Activated CD4-positive, alpha-beta T cell treated with anti-CD3 and anti-CD28 coated beads for 36 hours (primary cell): ENCODE measurements at regions of chr7 and their contacts with region 1.

Region 1: DNA sequence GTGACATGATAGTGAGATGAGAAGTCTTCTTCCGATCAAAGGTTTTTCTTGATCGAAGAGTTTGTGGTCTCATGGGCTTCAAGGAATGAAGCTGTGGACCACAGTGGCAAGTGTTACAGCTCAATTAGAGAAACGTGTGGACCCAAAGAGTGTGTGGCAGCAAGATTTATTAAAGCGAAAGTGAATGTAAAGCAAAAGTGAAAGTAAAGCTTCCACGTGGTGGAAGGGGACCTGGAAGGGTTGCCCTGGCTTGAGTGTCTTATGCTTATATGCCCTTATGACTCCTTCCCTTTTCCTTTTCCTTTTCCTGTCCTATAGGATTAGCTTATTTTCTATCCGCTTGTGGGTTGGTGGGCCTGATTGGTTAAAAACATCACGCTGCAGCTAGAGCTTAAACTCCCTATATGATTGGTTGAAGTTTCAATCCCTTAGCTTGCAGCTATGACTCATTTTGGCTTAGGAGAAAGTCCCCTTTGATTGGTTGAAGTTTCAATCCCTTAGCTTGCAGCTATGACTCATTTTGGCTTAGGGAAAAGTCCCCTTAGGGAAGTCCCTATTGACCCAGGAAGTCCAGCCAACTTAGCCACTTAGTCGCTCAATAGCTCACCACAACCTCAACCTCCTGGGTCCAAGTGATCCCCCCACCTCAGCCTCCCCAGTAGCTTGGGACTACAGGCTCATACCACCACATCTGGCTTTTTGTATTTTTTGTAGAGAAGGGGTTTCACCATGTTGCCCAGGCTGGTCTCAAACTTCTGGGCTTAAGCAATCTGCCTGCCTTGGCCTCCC is 34.7 kb downstream of the MRPS24 start:
- DNase-seq: peak; percentile 62
- ATAC-seq: peak; percentile 80
- H3K4me3 Mint-ChIP-seq: peak overlapping the region; percentile 66
- H3K27ac Mint-ChIP-seq: peak overlapping the region; percentile 93
- H3K4me1 Mint-ChIP-seq: peaks cover 30% of the 10 kb centered on the region
- H3K27me3 Mint-ChIP-seq: no peaks in the 10 kb centered on the region

Region 2: DNA sequence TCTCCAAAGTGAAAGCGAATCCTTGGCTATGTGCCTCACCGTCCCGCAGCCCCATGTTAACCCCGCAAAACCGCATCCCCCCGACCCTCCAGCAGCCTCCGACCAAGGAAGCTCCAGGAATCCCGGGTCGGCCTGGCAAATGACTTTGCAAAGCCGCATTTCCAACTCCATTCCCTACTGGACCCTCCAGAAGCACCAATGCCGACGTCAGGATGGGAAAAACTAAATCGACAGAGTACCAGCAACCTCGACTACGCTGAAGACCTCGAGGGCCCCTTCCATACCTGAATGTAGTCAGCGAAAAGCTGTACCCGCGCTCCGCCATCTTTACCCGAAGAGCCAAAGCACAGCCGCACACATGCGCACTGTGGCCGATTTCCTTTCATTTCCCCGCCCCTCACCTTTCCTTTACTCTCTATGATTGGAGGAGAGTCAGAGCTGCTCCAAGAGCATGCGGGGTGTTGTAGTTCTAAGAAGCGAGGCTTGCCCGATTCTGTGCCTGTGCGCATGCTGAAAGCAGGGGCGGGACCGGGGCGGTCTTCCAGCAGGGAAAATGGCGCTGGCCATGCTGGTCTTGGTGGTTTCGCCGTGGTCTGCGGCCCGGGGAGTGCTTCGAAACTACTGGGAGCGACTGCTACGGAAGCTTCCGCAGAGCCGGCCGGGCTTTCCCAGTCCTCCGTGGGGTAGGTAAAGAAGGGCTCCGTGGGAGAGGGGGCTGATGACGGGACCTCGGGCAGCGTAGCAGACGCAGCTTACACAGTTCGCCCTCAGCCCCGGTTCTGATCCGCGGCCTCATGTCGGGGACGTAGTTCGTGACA is 902.6 kb before region 1 on chr7 and contains the starts of genes MRPL32 and PSMA2:
- CTCF ChIA-PET with region 1: interaction called, 3 read pairs
- POLR2A ChIA-PET with region 1: no interaction called
- intact Hi-C with region 1: loop called in 1 of 2 experiments (anchors 10 kb)
- DNase-seq: peak; percentile 95
- ATAC-seq: peak; percentile 100
- H3K4me3 Mint-ChIP-seq: peak within 1 kb of the TSS; percentile 98
- H3K27ac Mint-ChIP-seq: peak within 1 kb of the TSS; percentile 100
- H3K4me1 Mint-ChIP-seq: peaks cover 67% of the 10 kb centered on the region
- H3K27me3 Mint-ChIP-seq: no peaks in the 10 kb centered on the region
- total RNA-seq, gene MRPL32: 74.7 to 75.5 TPM
- total RNA-seq, gene PSMA2: 109 to 217 TPM

Region 3: GRCh38 chr7:43302211-43302711 is 532.4 kb before region 1 on chr7:
- CTCF ChIA-PET with region 1: interaction called, 3 read pairs
- POLR2A ChIA-PET with region 1: no interaction called
- intact Hi-C with region 1: loop called in 1 of 2 experiments (anchors 5 kb)
- DNase-seq: peak; percentile 56
- ATAC-seq: peak; percentile 72
- H3K4me3 Mint-ChIP-seq: no peak overlapping the region
- H3K27ac Mint-ChIP-seq: no peak overlapping the region
- H3K4me1 Mint-ChIP-seq: peaks cover 35% of the 10 kb centered on the region
- H3K27me3 Mint-ChIP-seq: peaks cover 8% of the 10 kb centered on the region

Region 4: DNA sequence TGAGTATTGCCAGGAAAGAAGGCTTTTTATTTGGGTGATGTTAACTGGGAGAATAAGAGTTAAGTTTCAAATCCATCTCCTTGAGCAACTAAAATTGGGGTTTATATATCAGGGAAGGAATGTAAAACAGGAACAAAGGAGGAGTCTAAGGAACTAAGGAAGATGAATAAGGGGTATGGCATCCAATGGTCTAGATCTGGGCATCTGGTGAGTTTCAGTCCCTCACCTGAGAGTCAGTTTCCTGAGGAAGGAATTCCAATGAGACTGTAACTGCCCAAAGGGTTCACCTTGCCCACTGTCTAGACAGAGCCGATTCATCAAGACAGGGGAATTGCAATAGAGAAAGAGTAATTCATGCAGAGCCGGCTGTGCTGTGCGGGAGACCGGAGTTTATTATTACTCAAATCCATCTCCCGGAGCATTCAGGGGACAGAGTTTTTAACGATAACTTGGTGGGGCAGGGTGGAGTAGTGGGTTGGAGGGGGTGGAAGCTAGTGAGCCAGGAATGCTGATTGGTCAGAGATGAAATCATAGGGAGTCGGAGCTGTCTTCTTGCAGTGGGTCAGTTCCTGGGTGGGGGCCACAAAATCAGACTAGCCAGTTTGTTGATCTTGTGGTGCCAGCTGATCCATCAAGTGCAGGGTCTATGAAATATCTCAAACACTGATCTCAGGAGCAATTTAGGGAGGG is 440.1 kb before region 1 on chr7:
- CTCF ChIA-PET with region 1: no interaction called
- POLR2A ChIA-PET with region 1: no interaction called
- intact Hi-C with region 1: no loop called
- DNase-seq: no peak
- ATAC-seq: no peak
- H3K4me3 Mint-ChIP-seq: no peak overlapping the region
- H3K27ac Mint-ChIP-seq: no peak overlapping the region
- H3K4me1 Mint-ChIP-seq: no peaks in the 10 kb centered on the region
- H3K27me3 Mint-ChIP-seq: peaks cover 24% of the 10 kb centered on the region

Region 5: DNA sequence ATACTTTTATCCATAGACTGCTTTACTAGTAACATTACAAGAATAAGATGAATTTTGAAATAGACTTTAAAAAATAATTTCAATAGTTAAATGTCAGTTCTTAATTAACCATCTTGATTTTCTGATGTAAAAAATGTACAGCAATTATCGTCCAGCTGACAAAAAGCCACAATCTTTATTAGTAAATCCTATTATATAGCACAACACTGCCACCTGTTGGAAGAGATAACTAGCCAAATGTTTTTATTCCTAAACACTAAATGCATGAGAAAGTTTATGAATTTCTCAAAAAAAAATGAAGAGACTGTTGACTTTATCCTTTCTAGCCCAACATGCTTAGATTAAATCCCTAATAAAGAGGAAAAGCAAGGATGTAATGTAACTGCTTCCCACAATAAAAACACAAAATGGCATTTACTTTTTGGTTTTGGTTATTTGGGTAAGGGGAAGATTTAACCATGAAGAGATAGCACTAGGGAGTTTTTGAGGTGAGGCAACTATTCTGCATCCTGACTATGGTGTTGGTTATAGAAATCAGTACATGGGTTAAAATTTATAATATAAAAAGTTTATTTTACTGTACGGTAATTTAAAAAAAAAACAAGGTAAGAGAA is 113.4 kb before region 1 on chr7:
- CTCF ChIA-PET with region 1: interaction called, 13 read pairs
- POLR2A ChIA-PET with region 1: no interaction called
- intact Hi-C with region 1: no loop called
- DNase-seq: no peak
- ATAC-seq: no peak
- H3K4me3 Mint-ChIP-seq: no peak overlapping the region
- H3K27ac Mint-ChIP-seq: peak overlapping the region; percentile 52
- H3K4me1 Mint-ChIP-seq: peaks cover 41% of the 10 kb centered on the region
- H3K27me3 Mint-ChIP-seq: no peaks in the 10 kb centered on the region

Region 6: DNA sequence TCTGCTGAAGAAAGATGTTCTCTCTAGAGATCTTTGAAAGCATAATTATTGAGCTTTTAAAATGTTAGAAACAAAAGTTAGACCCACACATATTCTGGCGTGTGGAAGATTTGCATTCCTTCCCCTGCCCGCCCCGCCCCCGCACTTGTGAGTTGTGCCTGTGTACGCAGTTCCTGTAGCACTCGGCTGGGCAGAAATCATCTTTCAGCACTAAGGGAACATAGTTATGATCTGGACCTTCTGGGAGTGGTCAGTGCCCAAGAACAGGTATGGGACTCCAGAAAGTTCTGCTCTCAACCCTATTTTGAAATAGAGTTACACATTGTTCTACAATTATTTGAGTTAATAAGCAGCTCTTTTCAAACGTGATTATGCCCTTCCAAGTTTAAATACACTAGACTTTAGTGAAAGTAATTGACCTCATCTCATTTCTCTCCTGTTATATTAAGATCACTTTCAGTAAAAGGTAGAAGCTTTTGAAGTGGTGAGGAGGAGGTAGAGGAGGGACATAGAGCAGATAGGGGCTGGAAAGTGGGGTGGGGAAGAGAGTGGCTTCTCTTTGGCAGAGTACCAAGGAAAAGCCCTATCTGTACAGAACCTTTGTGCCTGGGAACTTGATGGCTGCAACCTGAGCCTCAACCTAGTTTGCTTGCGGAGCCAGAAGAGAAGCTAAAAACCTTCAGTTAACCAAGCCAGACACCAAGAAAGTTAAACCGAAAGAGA is 70.5 kb before region 1 on chr7:
- CTCF ChIA-PET with region 1: interaction called, 15 read pairs
- POLR2A ChIA-PET with region 1: no interaction called
- intact Hi-C with region 1: loop called in 1 of 2 experiments (anchors 5 kb)
- DNase-seq: peak; percentile 80
- ATAC-seq: peak; percentile 51
- H3K4me3 Mint-ChIP-seq: peak overlapping the region; percentile 30
- H3K27ac Mint-ChIP-seq: peak overlapping the region; percentile 55
- H3K4me1 Mint-ChIP-seq: peaks cover 42% of the 10 kb centered on the region
- H3K27me3 Mint-ChIP-seq: no peaks in the 10 kb centered on the region